Caco-2 (cell line): ENCODE measurements at regions of chr11 and their contacts with region 1.

Region 1: DNA sequence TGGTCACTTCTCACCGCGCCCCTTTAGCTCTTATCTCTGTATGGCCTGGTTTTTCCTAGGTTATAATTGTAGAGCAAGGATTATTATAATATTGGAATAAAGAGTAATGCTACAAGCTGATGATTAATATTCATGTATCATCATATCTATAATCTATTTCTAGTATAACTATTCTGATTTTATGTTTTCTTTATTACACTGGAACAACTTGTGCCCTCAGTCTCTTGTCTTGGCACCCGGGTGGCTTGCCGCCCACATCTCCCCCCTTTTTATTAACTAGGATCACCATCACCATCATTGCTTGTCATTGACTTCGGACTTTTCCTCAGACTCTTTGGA is 11.0 kb downstream of the OR52K1 start:
- DNase-seq: no peak
- H3K4me3 ChIP-seq: no peak overlapping the region
- H3K4me3 Mint-ChIP-seq: no peak overlapping the region
- H3K27ac Mint-ChIP-seq: no peak overlapping the region
- H3K4me1 ChIP-seq: no peaks in the 10 kb centered on the region
- H3K4me1 Mint-ChIP-seq: peaks cover 14% of the 10 kb centered on the region
- H3K27me3 ChIP-seq: no peaks in the 10 kb centered on the region
- H3K27me3 Mint-ChIP-seq: peaks cover 13% of the 10 kb centered on the region
- CTCF ChIP-seq: no peak

Region 2: GRCh38 chr11:4393209-4393857 is 100.1 kb before region 1 on chr11 and contains the start of gene TRIM21:
- CTCF ChIA-PET with region 1: no interaction called
- POLR2A ChIA-PET with region 1: no interaction called
- intact Hi-C with region 1: loop called (anchors 5 kb)
- DNase-seq: peak; percentile 82 to 85
- H3K4me3 ChIP-seq: peak within 1 kb of the TSS; percentile 83
- H3K4me3 Mint-ChIP-seq: peak within 1 kb of the TSS; percentile 88
- H3K27ac Mint-ChIP-seq: peak within 1 kb of the TSS; percentile 52
- H3K4me1 ChIP-seq: no peaks in the 10 kb centered on the region
- H3K4me1 Mint-ChIP-seq: peaks cover 7% of the 10 kb centered on the region
- H3K27me3 ChIP-seq: no peaks in the 10 kb centered on the region
- H3K27me3 Mint-ChIP-seq: peaks cover 3% of the 10 kb centered on the region
- CTCF ChIP-seq: no peak
- total RNA-seq, gene TRIM21: 5.4 and 6.1 TPM in 2 replicates

Region 3: DNA sequence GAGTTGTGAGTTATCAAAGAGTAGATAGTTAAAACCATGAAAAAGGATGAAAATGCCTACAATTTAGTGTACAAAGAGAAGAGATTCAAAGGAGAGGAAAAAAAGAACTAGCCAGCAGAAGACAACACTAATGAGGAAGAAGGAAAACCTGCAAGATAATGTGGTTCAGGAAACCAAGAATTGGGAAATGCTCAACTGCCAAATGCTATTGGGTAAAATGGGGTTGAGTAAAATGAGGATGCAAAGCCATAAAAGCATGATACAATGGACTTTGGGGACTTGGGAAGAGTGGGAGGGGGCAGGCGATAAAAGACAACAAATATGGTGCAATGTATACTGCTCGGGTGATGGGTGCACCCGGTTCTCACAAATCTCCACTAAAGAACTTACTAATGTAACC is 51.9 kb before region 1 on chr11:
- CTCF ChIA-PET with region 1: no interaction called
- POLR2A ChIA-PET with region 1: no interaction called
- intact Hi-C with region 1: loop called (anchors 1 kb)
- DNase-seq: no peak
- H3K4me3 ChIP-seq: no peak overlapping the region
- H3K4me3 Mint-ChIP-seq: no peak overlapping the region
- H3K27ac Mint-ChIP-seq: no peak overlapping the region
- H3K4me1 ChIP-seq: no peaks in the 10 kb centered on the region
- H3K4me1 Mint-ChIP-seq: no peaks in the 10 kb centered on the region
- H3K27me3 ChIP-seq: no peaks in the 10 kb centered on the region; the same call in 1 of the 2 replicates
- H3K27me3 Mint-ChIP-seq: peaks cover 8% of the 10 kb centered on the region
- CTCF ChIP-seq: no peak

Region 4: GRCh38 chr11:4511282-4512245 is 18.1 kb after region 1 on chr11:
- CTCF ChIA-PET with region 1: no interaction called
- POLR2A ChIA-PET with region 1: no interaction called
- intact Hi-C with region 1: no loop called
- DNase-seq: no peak
- H3K4me3 ChIP-seq: no peak overlapping the region
- H3K4me3 Mint-ChIP-seq: no peak overlapping the region
- H3K27ac Mint-ChIP-seq: no peak overlapping the region
- H3K4me1 ChIP-seq: no peaks in the 10 kb centered on the region
- H3K4me1 Mint-ChIP-seq: no peaks in the 10 kb centered on the region
- H3K27me3 ChIP-seq: no peaks in the 10 kb centered on the region
- H3K27me3 Mint-ChIP-seq: peaks cover 19% of the 10 kb centered on the region
- CTCF ChIP-seq: no peak

Region 5: DNA sequence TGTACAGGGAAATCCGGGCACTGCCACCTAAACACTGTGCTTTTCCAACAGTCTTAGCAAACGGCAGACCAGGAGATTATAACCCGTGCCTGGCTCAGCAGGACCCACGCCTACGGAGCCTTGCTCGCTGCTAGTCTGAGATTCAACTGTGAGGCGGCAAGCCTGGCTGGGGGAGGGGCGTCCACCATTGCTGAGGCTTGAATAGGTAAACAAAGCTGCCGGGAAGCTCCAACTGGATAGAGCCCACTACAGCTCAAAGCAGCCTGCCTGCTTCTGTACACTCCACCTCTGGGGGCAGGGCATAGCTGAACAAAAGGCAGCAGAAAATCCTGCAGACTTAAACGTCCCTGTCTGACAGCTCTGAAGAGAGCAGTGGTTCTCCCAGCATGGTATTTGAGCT is 38.2 kb after region 1 on chr11:
- CTCF ChIA-PET with region 1: no interaction called
- POLR2A ChIA-PET with region 1: no interaction called
- intact Hi-C with region 1: no loop called
- DNase-seq: peak; percentile 10 to 40
- H3K4me3 ChIP-seq: no peak overlapping the region
- H3K4me3 Mint-ChIP-seq: no peak overlapping the region
- H3K27ac Mint-ChIP-seq: no peak overlapping the region
- H3K4me1 ChIP-seq: no peaks in the 10 kb centered on the region
- H3K4me1 Mint-ChIP-seq: no peaks in the 10 kb centered on the region
- H3K27me3 ChIP-seq: no peaks in the 10 kb centered on the region
- H3K27me3 Mint-ChIP-seq: peaks cover 2% of the 10 kb centered on the region
- CTCF ChIP-seq: no peak